ENCODE measurements at regions of chr15 and their contacts with region 1.

Region 1: GRCh38 chr15:51935466-51936104 is 36.0 kb downstream of the LEO1 start:
- DNase-seq: no peak
- ATAC-seq: peak; percentile 13 to 35; a peak in 4 of 6 replicates
- H3K4me3 ChIP-seq: no peak overlapping the region
- H3K27ac ChIP-seq: no peak overlapping the region
- H3K4me1 ChIP-seq: peaks cover 5% of the 10 kb centered on the region; the same call in 2 of the 3 replicates
- CTCF ChIP-seq: no peak
- EP300 ChIP-seq: no peak
- POLR2A ChIP-seq: no peak
- RAD21 ChIP-seq: no peak

Region 2: DNA sequence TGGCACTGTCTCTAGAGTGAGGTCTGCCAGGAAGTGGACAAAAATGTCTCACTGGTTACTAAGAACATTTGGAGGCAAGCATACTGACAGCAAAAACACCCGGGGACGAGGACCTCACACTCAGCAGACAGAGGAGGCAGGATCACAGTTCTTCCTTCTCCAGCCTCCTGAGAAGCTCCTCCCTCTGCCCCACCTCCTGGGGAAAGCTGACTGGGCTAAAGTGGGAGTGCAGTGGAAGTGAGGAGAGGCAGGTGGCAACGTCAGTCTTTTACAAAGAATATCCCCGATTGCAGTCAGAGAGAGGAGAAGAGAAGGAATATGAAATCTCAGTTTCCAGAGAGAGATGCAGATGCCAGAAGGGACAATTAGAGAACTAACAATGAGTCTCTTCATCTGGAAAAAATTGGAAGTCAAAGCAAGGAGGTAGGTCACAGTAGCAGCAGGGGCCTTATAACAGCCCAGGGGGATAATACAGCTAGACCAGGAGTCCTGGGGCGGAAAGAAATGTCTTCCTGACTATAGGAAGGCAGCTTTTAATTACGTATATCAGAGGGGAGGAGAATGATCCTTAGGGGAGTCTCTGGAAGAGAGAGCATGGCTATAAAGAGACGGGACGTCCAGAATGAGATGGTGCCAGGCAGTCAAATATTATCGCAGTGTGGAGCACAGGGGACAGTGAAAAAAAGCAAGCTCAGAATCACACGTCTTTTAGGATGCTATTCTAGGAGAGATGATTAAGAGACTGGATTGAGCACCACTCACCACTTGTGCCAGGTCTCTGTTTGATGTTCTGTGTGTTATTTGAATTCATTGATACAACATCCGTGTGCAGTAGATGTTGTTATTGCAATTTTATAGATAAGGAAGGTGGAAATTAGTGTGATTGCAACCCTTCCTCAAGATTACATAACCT is 11.2 kb before region 1 on chr15:
- CTCF ChIA-PET with region 1: interaction called, 13 read pairs
- POLR2A ChIA-PET with region 1: no interaction called
- DNase-seq: no peak
- ATAC-seq: peak; percentile 60 to 66; a peak in 4 of 6 replicates
- H3K4me3 ChIP-seq: no peak overlapping the region
- H3K27ac ChIP-seq: no peak overlapping the region
- H3K4me1 ChIP-seq: no peaks in the 10 kb centered on the region
- CTCF ChIP-seq: no peak
- EP300 ChIP-seq: no peak
- POLR2A ChIP-seq: no peak
- RAD21 ChIP-seq: no peak

Measured in A549 (cell line).